Caco-2 (cell line): ENCODE measurements at regions of chrX and their contacts with region 1.

Region 1: DNA sequence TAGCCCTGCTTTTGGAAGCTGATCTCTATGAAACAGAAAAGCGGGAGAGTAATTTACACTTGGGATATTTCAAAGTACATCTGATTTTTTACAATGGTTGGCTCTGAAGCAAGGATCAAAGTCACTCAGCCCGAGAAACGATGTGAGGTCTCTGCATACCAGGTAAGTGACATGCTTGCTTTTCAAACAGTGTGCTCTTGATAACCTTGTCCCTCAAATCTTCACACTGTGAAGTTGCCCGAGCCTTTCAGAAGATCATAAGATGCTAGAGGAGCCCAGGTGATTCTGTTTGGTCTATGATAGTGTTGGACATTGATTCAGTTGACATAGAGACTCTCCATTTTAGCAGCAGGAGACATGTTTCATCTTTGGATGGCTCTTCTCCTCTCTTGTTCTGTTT is 47.1 kb upstream of the KLHL34 start:
- DNase-seq: peak; percentile 52 to 69
- H3K4me3 ChIP-seq: no peak overlapping the region
- H3K4me3 Mint-ChIP-seq: peak overlapping the region; percentile 19
- H3K27ac Mint-ChIP-seq: peak overlapping the region; percentile 79
- H3K4me1 ChIP-seq: peaks cover 23% of the 10 kb centered on the region
- H3K4me1 Mint-ChIP-seq: peaks cover 8% of the 10 kb centered on the region
- H3K27me3 ChIP-seq: no peaks in the 10 kb centered on the region
- H3K27me3 Mint-ChIP-seq: no peaks in the 10 kb centered on the region
- CTCF ChIP-seq: no peak

Region 2: GRCh38 chrX:21740329-21741274 is 35.4 kb after region 1 on chrX:
- CTCF ChIA-PET with region 1: no interaction called
- POLR2A ChIA-PET with region 1: no interaction called
- intact Hi-C with region 1: loop called (anchors 1 kb)
- DNase-seq: peak; percentile 39 to 48
- H3K4me3 ChIP-seq: no peak overlapping the region
- H3K4me3 Mint-ChIP-seq: peak overlapping the region; percentile 28
- H3K27ac Mint-ChIP-seq: peak overlapping the region; percentile 77
- H3K4me1 ChIP-seq: peaks cover 68% of the 10 kb centered on the region
- H3K4me1 Mint-ChIP-seq: peaks cover 15% of the 10 kb centered on the region
- H3K27me3 ChIP-seq: no peaks in the 10 kb centered on the region
- H3K27me3 Mint-ChIP-seq: no peaks in the 10 kb centered on the region
- CTCF ChIP-seq: no peak